PC-3 (cell line): ENCODE measurements at regions of chr22 and their contacts with region 1.

Region 1: GRCh38 chr22:37260155-37260795 is 16.2 kb upstream of the RAC2 start:
- DNase-seq: no peak
- ATAC-seq: no peak
- H3K4me3 ChIP-seq: no peak overlapping the region
- H3K27ac ChIP-seq: no peak overlapping the region
- H3K4me1 ChIP-seq: peaks cover 26% of the 10 kb centered on the region
- H3K27me3 ChIP-seq: no peaks in the 10 kb centered on the region
- CTCF ChIP-seq: no peak

Region 2: GRCh38 chr22:37166675-37167066 is 93.6 kb before region 1 on chr22:
- CTCF ChIA-PET with region 1: interaction called, 10 read pairs
- POLR2A ChIA-PET with region 1: no interaction called
- intact Hi-C with region 1: no loop called
- DNase-seq: peak; percentile 75
- ATAC-seq: peak; percentile 98
- H3K4me3 ChIP-seq: no peak overlapping the region
- H3K27ac ChIP-seq: no peak overlapping the region
- H3K4me1 ChIP-seq: peaks cover 11% of the 10 kb centered on the region
- H3K27me3 ChIP-seq: no peaks in the 10 kb centered on the region
- CTCF ChIP-seq: peak; percentile 86